ENCODE measurements at regions of chr10 and their contacts with region 1.

Region 1: GRCh38 chr10:96586419-96587263 is at the start of gene TM9SF3:
- DNase-seq: peak; percentile 95
- H3K4me3 Mint-ChIP-seq: peak within 1 kb of the TSS; percentile 97
- H3K27ac Mint-ChIP-seq: peak within 1 kb of the TSS; percentile 95
- H3K4me1 Mint-ChIP-seq: peaks cover 33% of the 10 kb centered on the region
- H3K27me3 Mint-ChIP-seq: peaks cover 6% of the 10 kb centered on the region
- total RNA-seq, gene TM9SF3: 75.6 to 79.7 TPM

Region 2: GRCh38 chr10:96339957-96340904 is 246.4 kb before region 1 on chr10:
- CTCF ChIA-PET with region 1: no interaction called
- POLR2A ChIA-PET with region 1: no interaction called
- intact Hi-C with region 1: loop called (anchors 1 kb)
- DNase-seq: peak; percentile 71
- H3K4me3 Mint-ChIP-seq: no peak overlapping the region
- H3K27ac Mint-ChIP-seq: no peak overlapping the region
- H3K4me1 Mint-ChIP-seq: peaks cover 7% of the 10 kb centered on the region
- H3K27me3 Mint-ChIP-seq: peaks cover 11% of the 10 kb centered on the region

Region 3: GRCh38 chr10:96673318-96674099 is 86.9 kb after region 1 on chr10:
- CTCF ChIA-PET with region 1: no interaction called
- POLR2A ChIA-PET with region 1: no interaction called
- intact Hi-C with region 1: no loop called
- DNase-seq: no peak
- H3K4me3 Mint-ChIP-seq: no peak overlapping the region
- H3K27ac Mint-ChIP-seq: no peak overlapping the region
- H3K4me1 Mint-ChIP-seq: peaks cover 4% of the 10 kb centered on the region
- H3K27me3 Mint-ChIP-seq: no peaks in the 10 kb centered on the region

Region 4: GRCh38 chr10:96690755-96691731 is 104.4 kb after region 1 on chr10:
- CTCF ChIA-PET with region 1: no interaction called
- POLR2A ChIA-PET with region 1: interaction called, 3 read pairs
- intact Hi-C with region 1: loop called (anchors 10 kb)
- DNase-seq: no peak
- H3K4me3 Mint-ChIP-seq: no peak overlapping the region
- H3K27ac Mint-ChIP-seq: no peak overlapping the region
- H3K4me1 Mint-ChIP-seq: peaks cover 21% of the 10 kb centered on the region
- H3K27me3 Mint-ChIP-seq: no peaks in the 10 kb centered on the region

Region 5: DNA sequence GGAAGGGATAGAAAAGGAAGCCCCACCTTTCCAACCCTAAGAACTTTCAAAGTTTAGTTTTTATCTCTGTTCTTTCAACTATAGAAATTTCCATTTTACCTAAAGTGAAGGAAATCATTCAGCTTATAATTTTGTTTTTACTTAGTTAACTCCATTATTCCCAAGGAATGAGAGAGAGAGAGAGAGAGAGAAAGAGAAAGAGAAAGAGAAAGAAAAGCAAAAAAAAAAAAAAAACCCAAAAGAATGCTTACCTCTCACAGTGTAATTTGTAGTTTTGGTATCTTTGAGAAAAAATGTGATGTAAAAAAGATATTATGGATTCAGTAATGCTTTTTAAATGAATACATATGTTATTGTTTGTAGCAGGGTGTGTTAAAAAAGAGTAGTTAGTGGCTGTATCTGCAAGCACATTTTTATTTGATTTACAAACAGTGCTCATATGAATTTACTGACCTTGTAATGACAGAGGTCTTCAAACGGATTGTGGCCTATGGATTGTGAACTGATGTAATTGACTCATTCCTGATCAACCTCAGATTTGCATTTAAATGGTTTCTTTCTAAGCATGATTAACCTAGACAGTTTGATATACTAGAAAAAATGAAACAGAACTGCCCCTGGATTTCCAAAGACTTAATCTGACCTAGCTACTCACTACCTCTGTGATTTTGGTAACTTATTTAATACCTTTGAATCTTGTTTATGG is 310.4 kb after region 1 on chr10:
- CTCF ChIA-PET with region 1: no interaction called
- POLR2A ChIA-PET with region 1: no interaction called
- intact Hi-C with region 1: loop called (anchors 5 kb)
- DNase-seq: no peak
- H3K4me3 Mint-ChIP-seq: no peak overlapping the region
- H3K27ac Mint-ChIP-seq: peak overlapping the region; percentile 43
- H3K4me1 Mint-ChIP-seq: peaks cover 48% of the 10 kb centered on the region
- H3K27me3 Mint-ChIP-seq: no peaks in the 10 kb centered on the region

Region 6: GRCh38 chr10:97400665-97401454 is 814.2 kb after region 1 on chr10 and contains the start of gene RRP12:
- CTCF ChIA-PET with region 1: no interaction called
- POLR2A ChIA-PET with region 1: no interaction called
- intact Hi-C with region 1: loop called (anchors 5 kb)
- DNase-seq: peak; percentile 88
- H3K4me3 Mint-ChIP-seq: peak within 1 kb of the TSS; percentile 93
- H3K27ac Mint-ChIP-seq: peak within 1 kb of the TSS; percentile 88
- H3K4me1 Mint-ChIP-seq: peaks cover 10% of the 10 kb centered on the region
- H3K27me3 Mint-ChIP-seq: no peaks in the 10 kb centered on the region
- total RNA-seq, gene RRP12: 40.4 to 41.8 TPM